OCI-LY7 (cell line): ENCODE measurements at regions of chr4 and their contacts with region 1.

Region 1: DNA sequence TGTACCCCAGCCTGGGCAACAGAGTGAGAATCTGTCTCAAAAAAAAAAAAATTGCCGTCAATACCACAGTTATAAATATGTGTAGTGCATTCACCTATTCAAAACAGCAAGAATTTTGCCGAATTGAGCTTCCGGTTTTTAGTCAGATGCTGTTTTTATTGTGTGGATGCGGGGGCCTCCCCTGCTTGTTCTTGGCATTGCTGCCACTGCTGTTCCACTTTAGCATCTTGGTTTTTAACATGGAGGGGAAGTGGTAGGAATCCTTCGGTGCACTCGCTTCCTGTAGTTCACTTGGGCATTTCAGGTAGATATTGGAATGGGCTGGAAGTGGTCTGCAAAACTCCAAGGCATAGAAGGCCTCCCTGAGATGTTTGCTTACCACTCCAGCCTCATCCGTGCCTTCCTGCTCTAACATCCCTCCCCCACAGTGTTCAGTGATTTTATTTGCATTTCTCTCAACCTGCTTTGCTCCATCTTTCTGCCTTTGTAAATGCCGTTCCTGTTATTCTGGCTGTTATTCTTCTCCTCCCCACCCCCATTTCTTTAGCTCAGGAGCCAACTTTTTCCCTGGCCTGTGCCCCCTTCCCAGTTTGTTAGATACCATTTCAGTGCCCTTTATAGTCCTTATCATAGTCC is 25.5 kb downstream of the MOB1B start:
- DNase-seq: peak; percentile 81
- H3K4me3 ChIP-seq: peak overlapping the region; percentile 63
- H3K27ac ChIP-seq: peak overlapping the region; percentile 88
- H3K4me1 ChIP-seq: peaks cover 94% of the 10 kb centered on the region
- CTCF ChIP-seq: peak; percentile 48

Region 2: DNA sequence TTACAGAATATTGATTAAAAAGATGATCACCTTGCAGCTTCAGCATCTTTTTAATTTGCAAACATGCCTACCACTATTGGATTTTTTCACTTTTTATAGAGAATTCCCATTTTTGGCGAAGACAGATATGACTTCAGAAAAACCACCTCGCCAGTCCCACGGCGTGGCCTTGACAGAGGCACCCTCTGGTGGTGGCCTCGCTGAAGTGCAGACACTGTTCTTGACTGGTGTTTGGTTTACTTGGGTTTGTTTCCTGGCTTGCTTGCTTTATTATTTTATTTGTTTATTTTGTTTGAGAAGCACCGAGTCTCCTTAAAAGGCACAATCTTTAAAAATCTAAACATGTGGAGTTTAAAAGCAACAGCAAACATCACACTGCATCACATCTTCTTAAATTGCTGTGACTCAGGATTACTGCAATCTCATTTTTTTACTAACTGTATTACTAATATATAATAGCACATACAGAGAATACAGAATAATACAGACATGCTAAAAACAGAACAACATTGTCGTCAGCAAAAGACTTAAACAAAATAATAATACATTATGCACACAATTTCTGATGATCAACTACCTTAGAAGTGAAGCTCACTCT is 422.4 kb before region 1 on chr4:
- CTCF ChIA-PET with region 1: no interaction called
- POLR2A ChIA-PET with region 1: no interaction called
- intact Hi-C with region 1: no loop called
- DNase-seq: peak; percentile 59
- H3K4me3 ChIP-seq: no peak overlapping the region
- H3K27ac ChIP-seq: no peak overlapping the region
- H3K4me1 ChIP-seq: no peaks in the 10 kb centered on the region
- CTCF ChIP-seq: peak; percentile 98

Region 3: DNA sequence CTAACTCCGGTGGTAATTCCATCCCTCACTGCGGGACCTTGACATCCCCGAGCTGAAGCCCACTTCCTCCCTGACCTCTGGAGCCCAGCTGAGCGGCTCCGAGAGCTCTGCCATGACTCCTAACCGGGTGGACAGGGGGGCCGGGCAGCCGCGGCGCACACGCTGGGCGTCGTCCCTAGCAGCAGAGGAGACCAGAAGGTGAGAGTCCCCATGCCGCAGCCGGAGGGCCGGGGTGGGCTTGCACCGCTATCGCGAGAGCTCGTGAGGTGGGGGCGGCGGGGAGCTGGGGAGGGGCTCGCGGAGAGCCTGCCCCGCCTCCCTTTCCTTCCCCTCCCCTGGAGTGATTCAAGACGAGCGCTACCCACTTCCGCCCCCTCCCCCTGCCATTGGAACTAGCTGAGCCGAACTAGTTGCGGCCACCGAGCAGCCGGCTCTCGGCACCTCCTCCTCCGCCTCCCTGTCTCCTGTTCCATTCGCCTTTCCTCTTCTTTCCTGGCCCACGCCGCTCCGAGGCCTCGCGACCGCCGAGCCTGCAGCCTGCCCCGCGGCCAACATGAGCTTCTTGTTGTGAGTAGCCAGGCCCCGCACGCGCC is 25.5 kb before region 1 on chr4 and contains the start of gene MOB1B:
- CTCF ChIA-PET with region 1: interaction called, 5 read pairs
- POLR2A ChIA-PET with region 1: interaction called, 14 read pairs
- intact Hi-C with region 1: loop called (anchors 2 kb)
- DNase-seq: peak; percentile 91
- H3K4me3 ChIP-seq: peak within 1 kb of the TSS; percentile 95
- H3K27ac ChIP-seq: peak within 1 kb of the TSS; percentile 46
- H3K4me1 ChIP-seq: peaks cover 15% of the 10 kb centered on the region
- CTCF ChIP-seq: 0 out of 2 replicates have a peak, but pooled peaks have one; percentile 24
- total RNA-seq, gene MOB1B: 3.9 and 4.7 TPM in 2 replicates

Region 4: GRCh38 chr4:70943114-70943513 is 15.5 kb after region 1 on chr4:
- CTCF ChIA-PET with region 1: interaction called, 4 read pairs
- POLR2A ChIA-PET with region 1: interaction called, 30 read pairs
- intact Hi-C with region 1: loop called (anchors 2 kb)
- DNase-seq: peak; percentile 77
- H3K4me3 ChIP-seq: peak overlapping the region; percentile 36
- H3K27ac ChIP-seq: peak overlapping the region; percentile 65
- H3K4me1 ChIP-seq: peaks cover 38% of the 10 kb centered on the region
- CTCF ChIP-seq: no peak

Region 5: DNA sequence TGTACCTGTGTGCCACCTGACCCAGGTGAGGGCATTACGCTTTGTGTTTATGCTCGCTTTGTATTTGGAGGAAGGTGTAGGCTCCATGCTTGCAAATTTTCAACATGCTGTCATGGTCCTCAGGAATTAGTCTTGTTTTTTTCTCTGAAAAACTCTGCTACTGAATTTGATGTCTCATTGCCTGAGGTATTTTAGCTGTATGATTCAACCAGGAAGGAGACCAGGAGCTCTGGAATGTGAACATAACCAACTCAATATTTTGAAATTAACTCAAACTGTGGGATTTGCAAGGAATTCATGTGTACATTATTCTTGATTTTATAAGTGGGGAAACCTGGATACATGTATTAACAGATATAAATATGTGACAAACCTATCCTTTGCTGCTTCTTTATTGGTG is 545.3 kb after region 1 on chr4:
- CTCF ChIA-PET with region 1: no interaction called
- POLR2A ChIA-PET with region 1: no interaction called
- intact Hi-C with region 1: no loop called
- DNase-seq: no peak
- H3K4me3 ChIP-seq: no peak overlapping the region
- H3K27ac ChIP-seq: no peak overlapping the region
- H3K4me1 ChIP-seq: no peaks in the 10 kb centered on the region
- CTCF ChIP-seq: no peak